IMR-90 (cell line): ENCODE measurements at regions of chr5 and their contacts with region 1.

Region 1: DNA sequence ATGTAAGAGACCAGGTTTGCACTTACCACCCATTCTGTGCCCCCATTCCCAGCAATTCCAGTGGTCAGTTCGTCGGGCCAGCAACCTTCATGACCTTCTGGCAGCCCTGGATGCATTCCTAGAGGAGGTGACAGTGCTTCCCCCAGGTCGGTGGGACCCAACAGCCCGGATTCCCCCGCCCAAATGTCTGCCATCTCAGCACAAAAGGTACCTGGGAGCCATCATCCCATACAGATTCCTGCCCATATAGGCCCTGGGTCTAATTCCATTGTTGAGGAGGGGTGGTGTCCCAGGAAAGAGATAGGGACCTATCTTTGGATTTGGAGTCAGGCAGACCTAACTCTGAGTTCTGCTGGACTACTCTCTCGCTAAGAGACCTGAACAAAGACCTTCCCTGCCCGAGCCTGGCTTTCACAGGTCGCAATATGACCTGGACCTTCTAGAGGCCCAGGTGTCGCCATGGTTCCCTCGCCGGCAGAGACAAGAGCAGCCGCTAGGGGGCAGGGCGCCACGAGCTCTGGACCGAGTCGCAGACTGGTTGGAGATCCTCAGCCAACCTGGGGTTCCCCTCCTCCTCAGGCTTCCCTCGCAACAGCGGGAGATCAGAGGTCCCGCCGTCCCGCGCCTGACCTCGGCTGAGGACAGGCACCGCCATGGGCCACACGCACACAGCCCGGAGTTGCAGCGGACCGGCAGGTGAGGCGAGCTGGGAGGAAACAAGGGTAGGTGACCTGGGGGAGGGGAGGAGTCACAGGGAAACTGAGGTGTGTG is 3.1 kb downstream of the SLC4A9 start:
- DNase-seq: peak; percentile 46
- ATAC-seq: peak; percentile 91
- H3K4me3 ChIP-seq: peak overlapping the region; percentile 26
- H3K27ac ChIP-seq: no peak overlapping the region
- H3K4me1 ChIP-seq: no peaks in the 10 kb centered on the region
- H3K27me3 ChIP-seq: peaks cover 17% of the 10 kb centered on the region; the same call in 1 of the 2 replicates
- CTCF ChIP-seq: peak; percentile 85
- POLR2A ChIP-seq: no peak
- RAD21 ChIP-seq: peak; percentile 58

Region 2: DNA sequence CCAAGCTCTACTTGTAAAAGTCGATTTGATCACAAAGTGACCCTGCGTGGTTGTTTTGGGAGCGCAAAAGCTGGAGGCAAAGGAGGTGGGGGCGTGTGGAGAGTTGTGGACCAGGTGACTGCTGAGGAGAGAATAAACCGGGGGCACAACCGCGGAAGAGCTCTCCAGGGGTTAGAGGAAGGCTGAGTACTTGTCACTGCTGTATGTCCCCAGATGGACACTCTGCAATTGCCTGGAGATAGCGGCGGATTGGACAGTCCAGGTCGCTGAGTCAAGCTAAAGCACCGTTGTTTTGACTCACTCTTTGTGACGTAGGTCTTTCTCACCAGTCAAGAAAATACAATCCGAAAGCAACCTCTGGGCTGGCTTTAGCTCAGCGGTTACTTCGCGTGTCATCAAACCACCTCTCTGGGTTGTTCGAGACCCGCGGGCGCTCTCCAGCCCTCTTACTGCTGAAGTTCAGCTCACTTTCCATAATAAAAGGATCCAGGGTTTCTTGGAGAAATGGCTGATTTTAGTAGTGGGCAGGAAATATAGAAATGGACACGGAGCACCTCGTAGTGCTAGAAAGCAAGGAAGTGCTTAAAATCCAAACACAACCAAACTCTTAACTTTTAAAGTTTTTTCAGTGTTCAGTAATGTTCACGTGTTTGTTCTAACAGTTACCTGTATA is 362.9 kb after region 1 on chr5:
- CTCF ChIA-PET with region 1: no interaction called
- POLR2A ChIA-PET with region 1: no interaction called
- dilution Hi-C with region 1: no loop called
- in situ Hi-C with region 1: no loop called
- intact Hi-C with region 1: loop called (anchors 2 kb)
- DNase-seq: peak; percentile 94
- ATAC-seq: peak; percentile 97
- H3K4me3 ChIP-seq: peak overlapping the region; percentile 38
- H3K27ac ChIP-seq: no peak overlapping the region
- H3K4me1 ChIP-seq: no peaks in the 10 kb centered on the region
- H3K27me3 ChIP-seq: no peaks in the 10 kb centered on the region
- CTCF ChIP-seq: no peak
- POLR2A ChIP-seq: no peak
- RAD21 ChIP-seq: no peak